HepG2 (cell line): ENCODE measurements at regions of chr1 and their contacts with region 1.

Region 1: DNA sequence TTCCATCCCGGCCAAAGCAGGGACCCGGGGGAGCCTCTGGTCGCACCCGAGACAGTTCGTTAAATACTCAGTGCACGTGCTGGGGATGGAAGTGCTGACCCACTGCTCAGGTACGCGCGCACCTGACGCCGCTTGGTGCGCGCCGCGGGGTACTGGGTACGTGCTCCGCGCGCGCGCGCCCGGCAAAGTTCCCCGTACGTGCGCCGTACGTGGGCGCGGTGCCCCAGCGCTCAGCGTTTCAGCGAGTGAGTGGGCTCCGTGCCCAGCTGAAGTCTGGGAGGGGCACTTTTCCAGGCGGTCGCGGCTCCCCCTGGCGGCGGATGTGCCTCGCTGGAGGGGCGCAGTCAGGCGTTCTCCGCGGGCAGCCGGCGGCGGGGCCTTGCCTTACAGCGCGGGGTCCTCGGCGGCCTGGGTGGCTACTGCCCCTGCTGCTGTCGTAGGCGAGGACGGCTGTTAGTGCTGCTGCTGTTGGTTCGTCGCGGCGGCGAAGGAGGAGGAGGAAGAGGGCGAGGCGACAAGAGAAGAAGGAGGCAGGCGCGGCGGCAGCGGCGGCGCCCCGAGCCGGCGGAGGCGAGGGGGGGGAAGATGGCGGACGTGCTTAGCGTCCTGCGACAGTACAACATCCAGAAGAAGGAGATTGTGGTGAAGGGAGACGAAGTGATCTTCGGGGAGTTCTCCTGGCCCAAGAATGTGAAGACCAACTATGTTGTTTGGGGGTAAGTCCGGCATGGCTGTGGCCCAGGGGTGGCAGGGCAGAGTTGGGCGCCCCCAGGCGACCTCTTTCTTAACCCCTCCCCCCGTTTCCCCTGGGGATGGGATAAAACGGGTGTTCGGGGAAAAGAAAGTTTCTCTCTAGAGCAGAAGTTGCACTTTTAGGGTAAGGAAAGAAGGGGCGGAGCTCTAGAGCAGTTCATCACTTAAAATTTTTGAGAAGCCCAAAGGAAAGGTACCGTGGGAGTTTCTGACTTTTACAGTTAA is at the start of gene CDC73:
- DNase-seq: peak; percentile 89
- ATAC-seq: peak; percentile 97
- H3K4me3 ChIP-seq: peak within 1 kb of the TSS; percentile 85 to 98 (median 94)
- H3K27ac ChIP-seq: peak within 1 kb of the TSS; percentile 91
- H3K4me1 ChIP-seq: peaks cover 32% of the 10 kb centered on the region
- H3K27me3 ChIP-seq: no peaks in the 10 kb centered on the region; a peak in 2 of 5 replicates
- CTCF ChIP-seq: peak; percentile 98
- EP300 ChIP-seq: peak in 1 of 2 experiments; percentile 47; a peak in 3 of 4 replicates
- POLR2A ChIP-seq: peak; percentile 72 to 80
- RAD21 ChIP-seq: peak; percentile 99
- total RNA-seq, gene CDC73: 26.3 and 38.3 TPM in 2 replicates

Region 2: DNA sequence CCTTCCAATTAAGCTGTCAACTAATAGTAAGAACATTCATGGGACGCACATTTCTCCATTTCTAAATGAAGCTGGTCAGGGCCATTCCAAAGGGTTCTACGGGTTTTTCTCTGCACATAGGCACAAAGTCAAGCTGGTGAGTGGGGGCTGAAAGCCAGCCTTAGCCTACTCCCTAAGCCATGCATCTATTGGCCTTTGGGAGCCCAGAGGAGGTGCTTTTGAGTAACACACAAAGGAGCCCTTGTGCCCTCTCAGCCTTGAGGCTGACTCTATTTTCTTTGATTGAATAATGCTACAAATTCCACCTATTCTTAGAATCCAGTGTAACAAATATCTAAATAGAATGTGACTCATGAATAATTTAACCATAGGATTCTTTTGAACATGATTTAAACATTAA is 412.4 kb before region 1 on chr1:
- CTCF ChIA-PET with region 1: no interaction called
- POLR2A ChIA-PET with region 1: no interaction called
- in situ Hi-C with region 1: no loop called
- intact Hi-C with region 1: loop called (anchors 5 kb)
- DNase-seq: peak; percentile 87
- ATAC-seq: peak; percentile 99
- H3K4me3 ChIP-seq: no peak overlapping the region
- H3K27ac ChIP-seq: peak overlapping the region; percentile 7
- H3K4me1 ChIP-seq: peaks cover 57% of the 10 kb centered on the region
- H3K27me3 ChIP-seq: no peaks in the 10 kb centered on the region
- CTCF ChIP-seq: no peak
- EP300 ChIP-seq: no peak
- POLR2A ChIP-seq: no peak
- RAD21 ChIP-seq: no peak

Region 3: GRCh38 chr1:193104906-193105820 is 16.7 kb before region 1 on chr1 and contains the start of gene GLRX2:
- CTCF ChIA-PET with region 1: interaction called, 7 read pairs
- POLR2A ChIA-PET with region 1: interaction called, 31 read pairs
- in situ Hi-C with region 1: no loop called
- intact Hi-C with region 1: loop called (anchors 1 kb)
- DNase-seq: peak; percentile 66
- ATAC-seq: peak; percentile 96
- H3K4me3 ChIP-seq: peak within 1 kb of the TSS; percentile 70 to 93 (median 82)
- H3K27ac ChIP-seq: peak within 1 kb of the TSS; percentile 89
- H3K4me1 ChIP-seq: peaks cover 56% of the 10 kb centered on the region
- H3K27me3 ChIP-seq: no peaks in the 10 kb centered on the region; a peak in 1 of 5 replicates
- CTCF ChIP-seq: peak; percentile 37
- EP300 ChIP-seq: peak in 1 of 2 experiments; percentile 39; a peak in 1 of 4 replicates
- POLR2A ChIP-seq: peak; percentile 79 to 86
- RAD21 ChIP-seq: peak; percentile 69
- total RNA-seq, gene GLRX2: 39.0 and 42.1 TPM in 2 replicates

Region 4: GRCh38 chr1:193111641-193112090 is 10.2 kb before region 1 on chr1:
- CTCF ChIA-PET with region 1: no interaction called
- POLR2A ChIA-PET with region 1: interaction called, 14 read pairs
- in situ Hi-C with region 1: no loop called
- intact Hi-C with region 1: no loop called
- DNase-seq: peak; percentile 67
- ATAC-seq: peak; percentile 53
- H3K4me3 ChIP-seq: peak overlapping the region; percentile 43 to 62 (median 52)
- H3K27ac ChIP-seq: peak overlapping the region; percentile 86
- H3K4me1 ChIP-seq: peaks cover 91% of the 10 kb centered on the region
- H3K27me3 ChIP-seq: no peaks in the 10 kb centered on the region
- CTCF ChIP-seq: no peak
- EP300 ChIP-seq: peak in 1 of 2 experiments; percentile 64; a peak in 3 of 4 replicates
- POLR2A ChIP-seq: no peak
- RAD21 ChIP-seq: no peak